ENCODE measurements at regions of chr6 and their contacts with region 1.

Region 1: GRCh38 chr6:13026557-13026956 is 301.8 kb downstream of the TBC1D7 start:
- DNase-seq: no peak
- ATAC-seq: no peak
- H3K4me3 Mint-ChIP-seq: no peak overlapping the region
- H3K27ac Mint-ChIP-seq: no peak overlapping the region
- H3K4me1 Mint-ChIP-seq: no peaks in the 10 kb centered on the region
- H3K27me3 Mint-ChIP-seq: peaks cover 5% of the 10 kb centered on the region
- CTCF ChIP-seq: no peak

Region 2: GRCh38 chr6:12890171-12890790 is 136.3 kb before region 1 on chr6:
- CTCF ChIA-PET with region 1: no interaction called
- POLR2A ChIA-PET with region 1: no interaction called
- intact Hi-C with region 1: no loop called
- DNase-seq: peak; percentile 45
- ATAC-seq: peak; percentile 39
- H3K4me3 Mint-ChIP-seq: no peak overlapping the region
- H3K27ac Mint-ChIP-seq: no peak overlapping the region
- H3K4me1 Mint-ChIP-seq: no peaks in the 10 kb centered on the region
- H3K27me3 Mint-ChIP-seq: peaks cover 1% of the 10 kb centered on the region
- CTCF ChIP-seq: peak; percentile 22

Region 3: GRCh38 chr6:12962987-12963386 is 63.6 kb before region 1 on chr6:
- CTCF ChIA-PET with region 1: no interaction called
- POLR2A ChIA-PET with region 1: no interaction called
- intact Hi-C with region 1: loop called (anchors 10 kb)
- DNase-seq: peak; percentile 7
- ATAC-seq: no peak
- H3K4me3 Mint-ChIP-seq: no peak overlapping the region
- H3K27ac Mint-ChIP-seq: no peak overlapping the region
- H3K4me1 Mint-ChIP-seq: peaks cover 9% of the 10 kb centered on the region
- H3K27me3 Mint-ChIP-seq: peaks cover 22% of the 10 kb centered on the region
- CTCF ChIP-seq: no peak

Region 4: DNA sequence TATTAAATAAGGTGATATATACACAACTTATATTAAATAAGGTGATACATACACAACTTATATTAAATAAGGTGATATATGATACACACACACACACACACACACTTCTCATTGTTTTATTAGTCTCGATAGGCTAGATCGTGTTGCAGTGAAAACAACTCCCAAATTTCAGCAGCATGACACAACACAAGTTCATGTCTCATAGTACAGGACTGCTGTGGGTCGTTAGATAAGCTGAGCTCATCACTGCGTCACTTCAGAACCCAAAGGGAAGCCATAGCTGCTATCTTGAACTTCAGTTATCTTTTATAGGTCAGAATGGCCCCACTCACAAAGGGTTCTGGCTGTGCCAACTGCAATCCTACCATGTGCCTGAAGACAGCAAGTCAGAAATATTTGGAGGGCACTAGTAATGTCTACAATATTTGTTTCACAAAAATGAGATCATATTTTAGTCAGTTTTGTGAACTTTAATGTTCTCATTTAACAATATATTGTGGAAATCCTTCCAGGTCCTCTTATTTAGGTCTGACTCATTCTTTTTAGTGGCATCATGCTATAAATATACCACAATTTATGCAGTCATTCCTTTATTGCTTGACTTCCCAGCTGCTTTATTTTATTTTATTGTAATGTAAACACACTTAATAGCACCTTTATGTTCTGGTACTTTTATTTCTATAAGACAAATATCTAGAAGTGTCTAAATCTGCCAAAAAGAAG is 19.8 kb before region 1 on chr6:
- CTCF ChIA-PET with region 1: no interaction called
- POLR2A ChIA-PET with region 1: no interaction called
- intact Hi-C with region 1: no loop called
- DNase-seq: no peak
- ATAC-seq: no peak
- H3K4me3 Mint-ChIP-seq: no peak overlapping the region
- H3K27ac Mint-ChIP-seq: no peak overlapping the region
- H3K4me1 Mint-ChIP-seq: no peaks in the 10 kb centered on the region
- H3K27me3 Mint-ChIP-seq: peaks cover 15% of the 10 kb centered on the region
- CTCF ChIP-seq: no peak

Measured in activated CD8-positive, alpha-beta T cell treated with anti-CD3 and anti-CD28 coated beads for 36 hours (primary cell).